Activated CD8-positive, alpha-beta T cell treated with anti-CD3 and anti-CD28 coated beads for 36 hours (primary cell): ENCODE measurements at regions of chr17 and their contacts with region 1.

Region 1: DNA sequence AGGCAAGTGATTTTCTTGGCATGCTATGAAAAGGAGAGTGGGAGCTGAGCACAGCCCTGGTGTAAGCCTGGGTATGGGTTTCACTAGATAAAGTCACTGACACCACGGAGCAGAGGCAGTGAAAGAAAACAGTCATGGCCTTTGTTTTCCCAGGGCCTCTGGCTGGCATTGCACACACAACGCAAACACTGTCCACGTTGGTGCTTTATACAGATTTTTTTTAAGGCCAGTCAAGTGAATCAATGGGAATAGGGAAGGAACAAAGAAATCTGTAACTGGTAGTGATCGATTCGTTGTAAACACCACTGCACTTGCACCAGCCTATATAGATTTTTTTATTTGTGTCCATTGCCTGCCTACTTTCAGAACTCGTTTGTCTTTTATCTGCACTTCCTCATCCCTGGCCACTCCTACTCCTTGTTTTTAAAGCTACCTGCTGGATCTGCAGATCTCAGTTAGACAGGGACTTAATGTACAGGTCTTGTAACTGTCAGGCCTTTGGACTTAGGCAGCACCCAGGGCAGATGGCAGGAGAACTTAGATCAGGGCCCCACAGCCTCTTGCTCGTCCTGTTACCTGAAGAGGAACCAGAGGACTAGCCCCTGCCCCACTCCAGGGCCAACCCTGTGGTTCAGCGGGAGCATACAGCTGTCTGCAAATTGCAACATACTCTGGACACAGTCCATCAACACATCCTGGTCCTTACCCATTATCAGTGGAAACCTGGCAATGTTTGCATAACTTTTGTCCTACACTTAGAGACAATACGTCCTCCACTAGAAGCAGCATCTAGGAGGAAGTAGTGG is 10.6 kb upstream of the TMIGD1 start:
- DNase-seq: no peak
- ATAC-seq: no peak
- H3K4me3 Mint-ChIP-seq: no peak overlapping the region
- H3K27ac Mint-ChIP-seq: no peak overlapping the region
- H3K4me1 Mint-ChIP-seq: peaks cover 19% of the 10 kb centered on the region
- H3K27me3 Mint-ChIP-seq: no peaks in the 10 kb centered on the region
- CTCF ChIP-seq: no peak

Region 2: DNA sequence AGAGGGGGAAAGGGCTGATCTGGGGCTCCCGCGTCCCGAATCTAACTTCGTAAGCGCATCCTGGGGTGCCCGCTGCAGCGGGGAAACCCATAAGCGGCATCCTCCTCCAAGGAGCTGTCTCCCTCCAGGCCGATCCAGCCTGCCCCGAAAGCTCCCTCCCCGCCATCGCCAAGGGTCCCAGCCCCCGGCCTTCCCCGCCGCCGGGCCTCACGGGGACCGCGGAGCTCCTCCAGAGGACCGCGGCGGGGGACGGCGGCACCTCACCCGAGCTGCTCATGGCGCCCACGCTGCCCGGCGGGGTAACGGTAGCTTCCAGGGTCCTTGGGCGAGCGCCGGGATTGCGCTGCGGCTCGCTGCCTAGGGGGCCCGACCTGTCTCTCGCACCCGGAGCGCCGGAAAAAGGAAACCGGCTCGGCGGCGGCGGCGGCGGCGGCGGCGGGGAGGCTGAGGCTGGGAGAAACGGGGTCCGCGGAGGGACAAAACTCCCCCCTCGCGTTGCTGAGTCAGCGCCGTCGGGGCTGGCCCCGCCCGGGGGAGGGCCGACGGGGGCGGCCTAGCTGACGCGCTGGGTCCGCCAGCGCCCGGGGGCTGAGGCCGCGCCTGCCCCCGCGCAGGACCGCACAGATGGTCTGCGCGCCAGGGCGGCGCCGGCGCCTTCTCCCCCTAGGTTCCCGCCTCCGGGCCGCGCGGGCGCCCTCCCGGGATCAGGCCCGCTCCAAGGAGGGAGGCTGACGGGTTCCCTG is 52.8 kb before region 1 on chr17 and contains the start of gene BLMH:
- CTCF ChIA-PET with region 1: interaction called, 26 read pairs
- POLR2A ChIA-PET with region 1: interaction called, 3 read pairs
- intact Hi-C with region 1: no loop called
- DNase-seq: peak; percentile 86
- ATAC-seq: peak; percentile 92
- H3K4me3 Mint-ChIP-seq: peak within 1 kb of the TSS; percentile 94
- H3K27ac Mint-ChIP-seq: peak within 1 kb of the TSS; percentile 91
- H3K4me1 Mint-ChIP-seq: peaks cover 18% of the 10 kb centered on the region
- H3K27me3 Mint-ChIP-seq: no peaks in the 10 kb centered on the region
- CTCF ChIP-seq: no peak
- total RNA-seq, gene BLMH: 75.9 to 78.6 TPM

Region 3: DNA sequence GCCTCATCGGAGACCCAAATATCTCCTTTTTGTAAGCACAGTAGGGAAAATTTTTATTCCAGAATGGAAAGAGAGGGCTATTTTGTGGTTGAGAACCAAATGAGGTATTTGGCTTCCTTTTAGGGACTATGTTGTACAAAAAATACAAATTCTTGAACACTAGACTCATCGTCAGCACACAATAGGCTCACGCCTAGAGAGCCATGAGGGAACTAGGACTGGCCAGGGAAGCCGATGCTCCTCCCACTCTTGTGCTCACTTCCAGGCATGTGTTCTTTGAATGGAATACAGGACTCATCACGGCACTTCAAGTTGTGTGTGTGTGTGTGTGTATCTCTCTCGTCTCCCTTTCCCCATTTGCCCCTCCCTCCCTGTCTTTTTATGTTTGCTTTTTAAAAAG is 34.9 kb before region 1 on chr17:
- CTCF ChIA-PET with region 1: no interaction called
- POLR2A ChIA-PET with region 1: no interaction called
- intact Hi-C with region 1: no loop called
- DNase-seq: no peak
- ATAC-seq: no peak
- H3K4me3 Mint-ChIP-seq: no peak overlapping the region
- H3K27ac Mint-ChIP-seq: no peak overlapping the region
- H3K4me1 Mint-ChIP-seq: no peaks in the 10 kb centered on the region
- H3K27me3 Mint-ChIP-seq: no peaks in the 10 kb centered on the region
- CTCF ChIP-seq: no peak

Region 4: DNA sequence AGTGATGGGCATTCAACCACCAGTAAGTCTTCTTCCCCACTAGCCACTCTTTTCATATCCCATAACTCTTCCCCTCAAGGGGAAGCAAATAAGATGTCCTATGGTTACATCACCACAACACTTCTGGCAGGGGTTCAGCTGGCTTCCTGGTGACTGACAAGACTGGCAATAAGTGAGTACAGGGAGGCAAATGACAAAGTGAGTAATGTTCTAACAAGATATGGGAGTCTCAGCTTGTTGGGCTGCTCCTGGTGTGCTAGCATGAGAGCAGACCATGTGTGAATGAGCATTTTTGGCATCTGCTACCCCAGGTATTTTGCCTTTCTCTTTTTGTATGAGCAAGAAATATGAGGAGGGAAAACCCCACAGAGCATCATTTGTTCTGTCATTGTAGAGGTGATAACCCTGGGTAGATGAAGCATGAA is 20.6 kb before region 1 on chr17:
- CTCF ChIA-PET with region 1: interaction called, 16 read pairs
- POLR2A ChIA-PET with region 1: no interaction called
- intact Hi-C with region 1: no loop called
- DNase-seq: peak; percentile 59
- ATAC-seq: peak; percentile 92
- H3K4me3 Mint-ChIP-seq: no peak overlapping the region
- H3K27ac Mint-ChIP-seq: peak overlapping the region; percentile 56
- H3K4me1 Mint-ChIP-seq: peaks cover 24% of the 10 kb centered on the region
- H3K27me3 Mint-ChIP-seq: no peaks in the 10 kb centered on the region
- CTCF ChIP-seq: no peak

Region 5: DNA sequence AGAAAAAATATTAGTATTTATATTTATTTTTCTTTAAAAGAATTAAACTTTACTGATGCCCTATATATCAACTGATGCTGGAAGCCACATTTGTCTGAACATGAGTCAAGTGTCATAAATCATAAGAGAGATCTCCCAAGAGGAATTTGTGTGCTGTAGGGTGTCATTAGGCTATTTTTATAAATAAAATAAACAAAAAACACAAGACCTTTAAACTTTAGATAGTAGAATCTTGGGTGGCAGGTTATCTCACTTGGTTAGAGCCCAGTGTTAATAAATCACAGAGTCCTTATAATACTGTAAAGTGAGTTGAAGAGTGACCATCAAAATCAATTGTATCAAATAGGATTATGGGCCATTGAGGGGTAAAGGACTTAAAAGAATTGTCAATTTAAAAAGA is 13.0 kb after region 1 on chr17:
- CTCF ChIA-PET with region 1: interaction called, 10 read pairs
- POLR2A ChIA-PET with region 1: no interaction called
- intact Hi-C with region 1: no loop called
- DNase-seq: no peak
- ATAC-seq: no peak
- H3K4me3 Mint-ChIP-seq: no peak overlapping the region
- H3K27ac Mint-ChIP-seq: no peak overlapping the region
- H3K4me1 Mint-ChIP-seq: peaks cover 13% of the 10 kb centered on the region
- H3K27me3 Mint-ChIP-seq: no peaks in the 10 kb centered on the region
- CTCF ChIP-seq: no peak

Region 6: DNA sequence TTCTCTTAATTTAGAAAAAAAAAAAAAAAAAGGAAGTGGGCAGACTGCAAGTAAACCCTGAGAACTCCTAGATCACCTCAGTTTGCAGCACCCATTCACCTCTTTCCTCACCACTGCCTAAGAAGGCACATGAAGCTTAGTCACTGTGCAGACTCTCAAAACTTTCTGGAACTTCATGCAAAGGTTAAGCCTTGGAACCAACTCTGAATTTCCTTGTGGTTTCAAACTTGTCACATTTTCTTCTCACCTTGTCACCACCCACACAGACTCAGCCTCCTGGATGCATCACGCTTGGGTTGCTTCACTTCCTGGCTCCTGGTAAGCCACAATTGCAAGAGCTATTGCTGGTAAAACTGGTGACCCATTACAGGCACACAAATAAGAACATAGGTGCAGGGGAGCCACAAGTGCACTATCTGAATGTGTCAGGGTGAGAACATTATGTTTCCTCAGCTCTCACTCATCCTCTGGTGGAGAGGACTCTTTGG is 19.3 kb after region 1 on chr17:
- CTCF ChIA-PET with region 1: interaction called, 15 read pairs
- POLR2A ChIA-PET with region 1: interaction called, 3 read pairs
- intact Hi-C with region 1: no loop called
- DNase-seq: peak; percentile 95
- ATAC-seq: peak; percentile 94
- H3K4me3 Mint-ChIP-seq: peak overlapping the region; percentile 22
- H3K27ac Mint-ChIP-seq: peak overlapping the region; percentile 82
- H3K4me1 Mint-ChIP-seq: peaks cover 36% of the 10 kb centered on the region
- H3K27me3 Mint-ChIP-seq: no peaks in the 10 kb centered on the region
- CTCF ChIP-seq: no peak

Region 7: DNA sequence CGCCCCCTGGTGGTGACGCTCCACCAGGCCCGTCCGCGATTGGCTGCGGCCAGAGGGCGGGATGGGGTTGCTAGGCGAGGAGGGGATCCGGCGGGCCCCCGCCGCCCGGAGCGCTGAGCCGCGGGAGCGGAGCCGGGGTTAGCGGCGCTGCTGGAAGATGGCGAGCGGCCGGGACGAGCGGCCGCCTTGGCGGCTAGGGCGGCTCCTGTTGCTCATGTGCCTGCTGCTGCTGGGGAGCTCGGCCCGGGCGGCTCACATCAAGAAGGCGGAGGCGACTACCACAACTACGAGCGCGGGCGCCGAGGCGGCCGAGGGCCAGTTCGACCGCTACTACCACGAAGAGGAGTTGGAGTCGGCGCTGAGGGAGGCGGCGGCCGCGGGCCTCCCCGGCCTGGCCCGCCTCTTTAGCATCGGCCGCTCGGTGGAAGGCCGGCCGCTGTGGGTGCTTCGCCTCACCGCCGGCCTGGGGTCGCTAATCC is 34.4 kb after region 1 on chr17 and contains the start of gene CPD:
- CTCF ChIA-PET with region 1: interaction called, 23 read pairs
- POLR2A ChIA-PET with region 1: interaction called, 7 read pairs
- intact Hi-C with region 1: no loop called
- DNase-seq: peak; percentile 97
- ATAC-seq: peak; percentile 93
- H3K4me3 Mint-ChIP-seq: peak within 1 kb of the TSS; percentile 73
- H3K27ac Mint-ChIP-seq: peak within 1 kb of the TSS; percentile 87
- H3K4me1 Mint-ChIP-seq: peaks cover 64% of the 10 kb centered on the region
- H3K27me3 Mint-ChIP-seq: no peaks in the 10 kb centered on the region
- CTCF ChIP-seq: no peak
- total RNA-seq, gene CPD: 25.9 to 26.8 TPM

Region 8: DNA sequence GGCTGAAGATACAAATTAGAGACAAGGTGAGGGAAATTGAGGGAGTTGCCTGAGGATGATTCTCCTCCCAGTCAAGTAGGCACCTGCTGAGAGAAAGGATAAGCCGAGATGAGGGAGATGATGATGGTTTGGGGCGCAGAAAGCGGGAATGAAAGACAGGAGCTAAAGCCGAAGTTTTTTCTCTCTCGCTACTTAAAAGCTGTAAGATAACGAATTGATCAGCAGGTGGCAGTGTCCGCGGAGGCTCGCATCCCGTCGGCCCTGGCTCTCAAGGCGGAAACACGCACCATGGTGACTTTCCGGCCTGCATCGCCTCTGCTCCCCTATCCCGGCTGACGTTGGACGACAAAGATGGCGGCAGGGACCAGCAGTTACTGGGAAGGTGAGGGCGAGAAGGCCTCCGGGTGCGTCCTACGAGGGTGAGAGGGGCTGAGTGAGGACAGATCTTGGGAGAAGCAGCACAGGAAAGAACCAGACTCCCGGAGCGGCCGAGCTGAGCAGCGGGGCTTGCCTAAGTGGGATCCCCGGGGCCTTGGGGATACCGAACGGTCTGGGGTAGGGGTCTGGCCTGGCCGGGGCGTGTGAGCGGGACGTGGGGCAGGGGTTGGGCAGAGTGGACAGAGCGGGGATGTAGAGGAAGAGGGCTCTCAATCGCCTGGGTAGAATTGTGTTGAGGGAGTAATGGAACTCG is 132.7 kb after region 1 on chr17 and contains the start of gene GOSR1:
- CTCF ChIA-PET with region 1: interaction called, 13 read pairs
- POLR2A ChIA-PET with region 1: no interaction called
- intact Hi-C with region 1: no loop called
- DNase-seq: peak; percentile 97
- ATAC-seq: peak; percentile 99
- H3K4me3 Mint-ChIP-seq: peak within 1 kb of the TSS; percentile 97
- H3K27ac Mint-ChIP-seq: peak within 1 kb of the TSS; percentile 98
- H3K4me1 Mint-ChIP-seq: peaks cover 32% of the 10 kb centered on the region
- H3K27me3 Mint-ChIP-seq: peaks cover 2% of the 10 kb centered on the region
- CTCF ChIP-seq: peak; percentile 72
- total RNA-seq, gene GOSR1: 37.1 to 38.8 TPM